Mammary epithelial cell (primary cell): ENCODE measurements at regions of chr3 and their contacts with region 1.

Region 1: GRCh38 chr3:172924546-172924945 is 174.0 kb downstream of the ECT2 start:
- DNase-seq: no peak
- H3K4me3 ChIP-seq: no peak overlapping the region
- H3K27ac ChIP-seq: no peak overlapping the region
- H3K4me1 ChIP-seq: no peaks in the 10 kb centered on the region
- H3K27me3 ChIP-seq: peaks cover 2% of the 10 kb centered on the region
- CTCF ChIP-seq: no peak

Region 2: GRCh38 chr3:172814738-172815137 is 109.8 kb before region 1 on chr3:
- CTCF ChIA-PET with region 1: no interaction called
- dilution Hi-C with region 1: no loop called
- in situ Hi-C with region 1: no loop called
- intact Hi-C with region 1: no loop called
- DNase-seq: no peak
- H3K4me3 ChIP-seq: no peak overlapping the region
- H3K27ac ChIP-seq: no peak overlapping the region
- H3K4me1 ChIP-seq: no peaks in the 10 kb centered on the region
- H3K27me3 ChIP-seq: no peaks in the 10 kb centered on the region
- CTCF ChIP-seq: no peak

Region 3: GRCh38 chr3:172991424-172991996 is 67.0 kb after region 1 on chr3:
- CTCF ChIA-PET with region 1: no interaction called
- dilution Hi-C with region 1: no loop called
- in situ Hi-C with region 1: loop called in 1 of 2 experiments (anchors 5 kb)
- intact Hi-C with region 1: no loop called
- DNase-seq: no peak
- H3K4me3 ChIP-seq: no peak overlapping the region
- H3K27ac ChIP-seq: no peak overlapping the region
- H3K4me1 ChIP-seq: no peaks in the 10 kb centered on the region
- H3K27me3 ChIP-seq: peaks cover 2% of the 10 kb centered on the region
- CTCF ChIP-seq: no peak